ENCODE measurements at regions of chr4 and their contacts with region 1.

Region 1: DNA sequence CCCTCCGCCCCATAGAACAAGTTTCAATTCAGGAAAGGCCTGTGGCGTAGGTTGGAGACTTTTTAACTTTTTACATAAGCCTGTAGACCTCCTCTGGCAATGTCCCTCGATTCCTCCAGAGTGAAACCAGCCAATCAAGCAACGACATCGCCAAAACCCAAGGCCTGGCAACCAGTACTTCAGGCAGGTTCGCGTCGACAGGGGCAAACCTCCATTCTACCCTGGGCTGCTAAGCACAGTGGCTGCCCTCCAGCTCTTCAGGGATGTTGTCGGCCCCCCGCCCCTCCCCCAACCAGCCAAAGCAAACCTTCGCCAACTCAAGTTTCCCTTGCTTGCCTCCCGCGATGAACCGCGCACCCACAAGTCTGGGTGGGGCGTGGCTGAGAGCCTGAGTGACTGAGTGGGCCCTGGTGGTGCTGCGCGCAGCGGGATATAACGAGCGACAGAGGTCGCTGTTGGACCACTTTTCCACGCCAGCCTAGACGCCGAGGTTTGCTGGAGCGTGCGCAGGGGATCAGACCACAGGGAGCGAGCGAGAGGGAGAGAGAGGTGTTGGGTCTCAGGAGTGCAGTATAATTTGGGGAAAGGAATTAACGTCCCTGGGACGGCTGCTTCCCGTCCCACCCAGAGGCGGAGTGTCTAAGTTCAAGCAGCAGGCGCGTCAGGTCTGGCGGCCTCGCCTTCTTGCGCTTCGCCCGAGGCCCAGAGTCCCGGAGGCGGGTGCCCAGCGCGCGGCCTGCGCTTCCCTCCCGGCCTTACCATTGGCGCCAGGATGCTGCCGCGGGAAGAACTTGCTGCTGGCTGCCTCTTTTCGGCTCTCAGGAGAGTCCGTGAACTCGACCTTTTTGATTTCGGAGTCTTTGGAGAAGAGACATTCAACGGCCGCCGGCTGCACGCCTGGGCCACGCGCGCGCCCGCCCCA is 9.0 kb upstream of the PITX2 start:
- DNase-seq: peak; percentile 78
- H3K4me3 ChIP-seq: peak overlapping the region; percentile 34
- H3K27ac ChIP-seq: no peak overlapping the region
- H3K4me1 ChIP-seq: peaks cover 10% of the 10 kb centered on the region
- H3K27me3 ChIP-seq: peaks cover 92% of the 10 kb centered on the region
- CTCF ChIP-seq: peak; percentile 58

Region 2: GRCh38 chr4:110854021-110854678 is 222.3 kb after region 1 on chr4:
- intact Hi-C with region 1: loop called (anchors 10 kb)
- DNase-seq: peak; percentile 71
- H3K4me3 ChIP-seq: no peak overlapping the region
- H3K27ac ChIP-seq: peak overlapping the region; percentile 9
- H3K4me1 ChIP-seq: no peaks in the 10 kb centered on the region
- H3K27me3 ChIP-seq: no peaks in the 10 kb centered on the region
- CTCF ChIP-seq: no peak

Region 3: DNA sequence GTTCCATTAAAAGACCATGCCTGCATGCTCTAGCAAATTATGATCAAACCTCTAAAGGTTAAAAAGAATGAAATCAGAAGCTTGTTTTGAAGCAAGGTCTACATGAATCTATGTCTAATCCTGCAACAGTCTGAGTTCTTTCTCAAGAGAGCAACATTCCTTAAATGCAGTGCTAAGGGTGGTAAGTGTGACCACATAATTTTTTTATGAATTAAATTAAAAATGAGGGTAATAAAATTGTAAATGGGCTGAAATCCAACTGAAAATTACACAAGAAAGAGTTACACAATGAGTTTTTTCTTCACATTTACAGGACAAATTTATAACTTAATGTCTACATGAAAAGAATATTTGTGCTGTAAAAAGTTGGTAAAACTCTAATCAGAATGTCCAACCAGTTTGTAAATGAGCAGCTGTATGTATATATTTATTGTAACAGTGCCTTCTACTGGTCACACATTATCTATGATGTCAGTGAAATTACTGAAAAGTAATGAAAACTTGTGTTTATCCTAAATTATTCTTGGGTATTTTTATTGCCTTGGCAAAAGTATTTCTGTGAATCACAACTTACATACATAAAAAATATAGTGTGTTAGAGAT is 327.3 kb after region 1 on chr4:
- intact Hi-C with region 1: loop called (anchors 2 kb)
- DNase-seq: no peak
- H3K4me3 ChIP-seq: no peak overlapping the region
- H3K27ac ChIP-seq: no peak overlapping the region
- H3K4me1 ChIP-seq: no peaks in the 10 kb centered on the region
- H3K27me3 ChIP-seq: no peaks in the 10 kb centered on the region
- CTCF ChIP-seq: peak; percentile 37

Region 4: DNA sequence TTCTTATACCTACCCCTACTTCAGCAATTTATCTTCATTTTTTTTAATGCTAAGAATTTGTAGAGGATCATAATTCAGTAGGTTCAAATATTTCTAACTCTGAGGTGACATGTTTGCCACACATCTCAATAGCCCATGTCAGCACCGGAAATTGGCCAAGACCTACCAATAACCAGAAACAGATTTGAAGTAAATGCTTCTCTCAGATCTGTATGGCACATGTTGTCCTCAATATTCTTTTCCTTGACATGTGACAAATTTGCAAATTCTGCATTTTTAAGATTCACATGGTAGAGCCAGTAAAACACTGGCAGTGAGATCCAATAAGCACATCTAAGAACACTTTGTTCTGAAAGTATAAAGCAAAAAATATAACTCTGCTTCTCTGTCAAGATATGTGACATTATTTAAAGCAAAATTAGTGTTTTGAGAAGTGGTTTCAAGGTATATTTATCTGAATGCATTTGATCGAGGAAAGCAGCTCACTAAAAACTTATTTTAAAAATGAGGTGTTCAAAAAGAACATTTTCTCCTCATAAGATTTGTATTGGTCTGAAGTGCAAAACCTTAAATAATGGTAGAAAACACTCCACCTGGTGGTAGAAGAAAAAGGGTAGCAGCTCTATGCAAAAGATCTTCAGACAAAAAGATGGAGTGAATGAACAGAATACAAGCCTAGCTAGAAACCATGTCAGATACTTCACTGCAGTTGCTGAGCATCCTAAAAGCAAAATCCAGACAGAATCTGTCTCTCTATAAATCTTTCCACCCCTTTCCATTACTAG is 999.6 kb after region 1 on chr4:
- intact Hi-C with region 1: loop called (anchors 10 kb)
- DNase-seq: no peak
- H3K4me3 ChIP-seq: no peak overlapping the region
- H3K27ac ChIP-seq: no peak overlapping the region
- H3K4me1 ChIP-seq: no peaks in the 10 kb centered on the region
- H3K27me3 ChIP-seq: no peaks in the 10 kb centered on the region
- CTCF ChIP-seq: no peak

Measured in colonic mucosa (tissue), 4 donors.